ENCODE measurements at regions of chr4 and their contacts with region 1.

Region 1: DNA sequence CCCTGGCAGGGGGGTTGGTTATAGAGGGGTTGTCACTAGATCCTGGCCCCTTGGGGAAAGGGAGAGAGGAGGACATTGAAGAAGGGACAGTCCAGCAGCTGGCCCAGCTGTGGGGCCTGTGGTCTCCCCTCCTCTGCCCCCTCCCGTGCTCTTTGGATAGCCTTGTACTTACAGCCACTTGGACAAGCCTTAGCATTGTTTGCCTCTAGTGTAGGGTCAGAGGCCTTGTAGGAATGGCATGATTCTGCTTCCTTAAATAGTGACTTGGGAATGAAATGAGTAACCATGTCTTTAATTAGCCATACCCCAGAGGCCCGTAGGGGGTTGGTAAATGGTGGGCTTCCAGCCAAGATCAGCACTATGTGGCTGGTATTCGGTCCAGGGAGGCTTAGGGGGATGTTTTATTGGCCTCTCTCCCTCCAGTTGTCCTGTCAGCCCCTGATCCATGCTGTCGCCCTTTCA is 230.6 kb downstream of the PTTG2 start:
- DNase-seq: peak in 1 of 2 donors; percentile 39
- ATAC-seq: peak; percentile 98 to 99
- H3K4me3 ChIP-seq: no peak overlapping the region
- H3K27ac ChIP-seq: peak overlapping the region; percentile 60 to 75 (median 66)
- H3K4me1 ChIP-seq: peaks cover 15 to 16% of the 10 kb centered on the region in 2 donors
- H3K27me3 ChIP-seq: no peaks in the 10 kb centered on the region
- CTCF ChIP-seq: no peak
- POLR2A ChIP-seq: no peak

Region 2: DNA sequence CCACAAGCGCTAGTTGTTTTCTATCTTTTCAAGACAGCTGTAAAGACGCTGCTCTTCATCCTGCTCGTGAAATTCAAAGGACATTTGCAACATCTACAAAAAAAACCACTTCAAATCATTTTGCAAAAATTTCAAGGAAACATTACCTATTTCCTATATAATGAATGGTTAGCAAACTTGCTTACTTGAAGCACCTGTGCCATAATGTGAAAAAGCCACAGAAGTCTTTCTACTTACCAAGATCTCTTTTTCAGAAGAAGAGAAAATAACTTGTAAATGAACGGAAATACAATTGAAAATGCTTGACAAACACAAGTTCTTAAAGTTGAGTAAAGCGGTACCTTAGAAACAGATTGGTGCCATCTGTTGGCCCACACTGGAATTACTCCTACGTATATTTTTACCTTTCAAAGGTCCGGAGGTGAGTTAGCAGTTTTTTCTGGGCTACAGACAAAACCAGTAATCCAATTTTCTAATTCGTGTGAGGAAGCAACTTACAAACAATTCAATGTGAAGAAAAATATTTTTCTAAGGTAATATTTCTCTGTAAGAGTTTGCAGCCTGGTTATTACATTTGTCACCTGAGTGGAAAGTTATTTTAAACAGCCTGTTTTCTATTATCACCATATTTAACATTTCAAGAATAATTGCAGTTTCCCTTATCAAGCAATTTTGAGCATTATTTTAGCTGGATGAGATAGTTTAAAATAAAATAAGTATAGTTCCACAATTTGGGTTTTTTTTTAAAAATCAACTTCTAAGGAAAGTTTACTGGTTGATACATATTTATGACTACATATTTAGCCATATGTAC is 666.0 kb after region 1 on chr4 and contains the start of gene TLR6:
- in situ Hi-C with region 1: no loop called
- intact Hi-C with region 1: loop called (anchors 5 kb)
- DNase-seq: no peak
- ATAC-seq: peak; percentile 63 to 72
- H3K4me3 ChIP-seq: peak within 1 kb of the TSS in 2 of 4 donors; percentile 23 to 32
- H3K27ac ChIP-seq: peak within 1 kb of the TSS; percentile 56 to 60 (median 58)
- H3K4me1 ChIP-seq: peaks cover 3 to 8% of the 10 kb centered on the region in 2 donors
- H3K27me3 ChIP-seq: no peaks in the 10 kb centered on the region
- CTCF ChIP-seq: peak in 4 of 5 experiments; percentile 55 to 75 (median 68)
- POLR2A ChIP-seq: no peak
- total RNA-seq, gene TLR6: 0.29 to 0.75 (median 0.48) TPM